CD8-positive, alpha-beta memory T cell (primary cell): ENCODE measurements at regions of chr6 and their contacts with region 1.

Region 1: GRCh38 chr6:30453508-30454116 is 35.7 kb upstream of the HLA-E start:
- DNase-seq: peak; percentile 72 to 89 (median 81)
- H3K4me3 ChIP-seq: no peak overlapping the region
- H3K4me3 Mint-ChIP-seq: peak overlapping the region in 5 of 7 donors; percentile 25 to 75 (median 50)
- H3K27ac ChIP-seq: no peak overlapping the region
- H3K27ac Mint-ChIP-seq: peak overlapping the region in 1 of 8 donors; percentile 58
- H3K4me1 ChIP-seq: peaks cover 35% of the 10 kb centered on the region
- H3K4me1 Mint-ChIP-seq: peaks cover 39 to 55% (median 47%) of the 10 kb centered on the region in 3 donors
- H3K27me3 ChIP-seq: peaks cover 67% of the 10 kb centered on the region
- H3K27me3 Mint-ChIP-seq: peaks cover 54 to 85% of the 10 kb centered on the region in 2 donors

Region 2: DNA sequence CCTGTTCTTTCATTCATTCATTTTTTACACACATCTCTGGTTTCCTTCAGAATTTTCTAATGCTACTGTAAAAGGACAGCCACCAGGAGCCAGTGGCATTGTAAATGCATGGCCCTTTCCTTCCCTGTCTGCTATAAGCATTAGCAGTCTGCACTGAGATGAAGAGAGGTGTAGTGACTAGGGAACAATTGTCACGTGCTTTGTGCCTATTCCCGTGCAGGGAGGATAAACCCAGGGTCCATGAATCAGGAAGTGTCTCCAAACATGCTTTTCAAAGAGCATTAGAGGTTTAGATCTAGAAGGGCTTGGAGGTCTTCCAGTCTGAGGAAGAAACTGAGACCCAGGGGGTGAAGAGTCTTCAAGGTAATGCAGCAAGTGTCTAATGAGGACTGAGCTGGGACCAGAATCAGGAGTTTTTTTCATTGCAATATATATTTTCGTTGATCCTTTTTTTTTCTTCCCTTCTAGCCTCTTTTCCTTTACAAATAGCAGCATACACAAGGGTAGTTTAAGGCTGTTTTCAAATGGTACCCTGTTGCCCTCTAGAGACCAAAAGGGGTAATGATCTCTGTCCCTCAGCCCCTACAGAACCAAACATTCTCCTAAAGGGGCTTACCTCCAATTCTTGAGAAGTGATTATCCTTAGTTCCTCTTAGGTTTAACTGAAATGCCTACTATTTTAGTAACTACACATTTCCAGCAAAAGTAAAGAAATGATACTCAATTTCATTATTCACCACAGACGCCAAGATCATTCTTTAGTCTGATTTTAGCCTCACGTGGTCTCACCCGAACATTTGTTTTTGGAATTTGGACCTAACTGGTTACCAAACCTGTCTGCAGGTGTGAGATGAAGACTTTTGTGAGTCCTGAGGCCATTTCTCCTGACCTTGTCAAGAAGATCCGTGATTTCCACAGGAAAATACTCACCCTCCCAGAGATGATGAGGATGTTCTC is 283.7 kb before region 1 on chr6:
- CTCF ChIA-PET with region 1: no interaction called
- POLR2A ChIA-PET with region 1: no interaction called
- DNase-seq: peak in 2 of 5 donors; percentile 6 to 26
- H3K4me3 ChIP-seq: no peak overlapping the region
- H3K4me3 Mint-ChIP-seq: no peak overlapping the region
- H3K27ac ChIP-seq: no peak overlapping the region
- H3K27ac Mint-ChIP-seq: no peak overlapping the region
- H3K4me1 ChIP-seq: no peaks in the 10 kb centered on the region
- H3K4me1 Mint-ChIP-seq: peaks cover 2 to 8% (median 5%) of the 10 kb centered on the region in 3 donors
- H3K27me3 ChIP-seq: peaks cover 25% of the 10 kb centered on the region
- H3K27me3 Mint-ChIP-seq: peaks cover 39 to 70% of the 10 kb centered on the region in 2 donors

Region 3: GRCh38 chr6:30465595-30466306 is 12.1 kb after region 1 on chr6:
- CTCF ChIA-PET with region 1: interaction called, 26 read pairs
- POLR2A ChIA-PET with region 1: interaction called, 8 read pairs
- DNase-seq: no peak
- H3K4me3 ChIP-seq: peak overlapping the region; percentile 63
- H3K4me3 Mint-ChIP-seq: peak overlapping the region in 6 of 7 donors; percentile 42 to 91 (median 70)
- H3K27ac ChIP-seq: no peak overlapping the region
- H3K27ac Mint-ChIP-seq: peak overlapping the region in 1 of 8 donors; percentile 15
- H3K4me1 ChIP-seq: peaks cover 46% of the 10 kb centered on the region
- H3K4me1 Mint-ChIP-seq: peaks cover 43 to 61% (median 54%) of the 10 kb centered on the region in 3 donors
- H3K27me3 ChIP-seq: peaks cover 90% of the 10 kb centered on the region
- H3K27me3 Mint-ChIP-seq: peaks cover 66 to 82% of the 10 kb centered on the region in 2 donors

Region 4: GRCh38 chr6:30600451-30600961 is 146.9 kb after region 1 on chr6:
- CTCF ChIA-PET with region 1: interaction called, 14 read pairs
- POLR2A ChIA-PET with region 1: interaction called, 3 read pairs
- DNase-seq: no peak
- H3K4me3 ChIP-seq: no peak overlapping the region
- H3K4me3 Mint-ChIP-seq: no peak overlapping the region
- H3K27ac ChIP-seq: no peak overlapping the region
- H3K27ac Mint-ChIP-seq: peak overlapping the region in 5 of 8 donors; percentile 33 to 87 (median 73)
- H3K4me1 ChIP-seq: peaks cover 7% of the 10 kb centered on the region
- H3K4me1 Mint-ChIP-seq: peaks cover 22 to 28% (median 24%) of the 10 kb centered on the region in 3 donors
- H3K27me3 ChIP-seq: no peaks in the 10 kb centered on the region
- H3K27me3 Mint-ChIP-seq: peaks cover 0 to 2% of the 10 kb centered on the region in 2 donors